CD8-positive, alpha-beta T cell (primary cell): ENCODE measurements at regions of chr7 and their contacts with region 1.

Region 1: DNA sequence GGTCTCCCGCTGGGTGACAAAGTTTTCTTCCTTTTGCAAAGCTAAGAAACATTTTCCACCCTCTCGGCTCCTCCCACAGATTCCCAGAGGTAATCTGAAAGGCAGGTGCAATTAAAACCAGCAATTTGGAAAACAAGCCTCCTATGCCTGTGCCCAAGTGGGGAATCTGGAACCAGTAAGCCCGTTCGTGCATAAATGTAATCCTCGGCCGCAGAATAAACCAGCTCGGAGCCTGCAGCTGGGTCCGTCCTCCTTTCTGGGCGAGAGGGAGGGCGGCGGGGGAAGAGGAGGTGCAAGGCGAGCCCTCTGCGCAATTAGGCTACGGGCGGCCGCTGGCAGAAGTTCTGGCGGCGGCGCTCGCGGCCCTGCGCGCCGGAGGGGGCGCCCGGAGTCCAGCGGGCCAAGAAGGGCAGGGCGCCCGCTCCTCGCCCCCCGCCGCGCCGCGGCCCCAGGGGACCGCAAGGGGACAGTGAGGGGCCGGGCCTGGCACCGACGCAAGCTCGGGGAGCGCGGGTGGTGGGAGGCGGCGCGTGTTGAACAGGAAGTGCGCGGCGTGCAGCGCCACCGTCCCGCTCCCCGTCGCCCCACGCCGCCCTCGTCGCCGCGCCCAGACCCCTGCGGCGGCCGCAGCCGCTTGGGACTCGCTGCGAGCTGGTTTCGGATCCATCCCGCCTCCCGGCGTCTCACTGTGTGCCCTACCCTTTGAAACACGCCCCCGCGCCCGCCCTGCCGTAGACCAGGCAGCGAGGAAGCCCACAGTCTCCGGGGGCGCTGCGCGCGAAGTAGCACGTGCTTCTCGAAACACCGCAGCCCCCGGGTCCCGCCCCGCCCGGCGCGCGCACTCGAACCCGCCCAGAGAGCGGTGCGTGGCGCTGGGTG is at the start of gene PRKAG2:
- DNase-seq: peak; percentile 53 to 85 (median 78)
- ATAC-seq: peak; percentile 59
- H3K4me3 ChIP-seq: peak within 1 kb of the TSS; percentile 71 to 95
- H3K4me3 Mint-ChIP-seq: peak within 1 kb of the TSS; percentile 97
- H3K27ac ChIP-seq: peak within 1 kb of the TSS; percentile 53 to 67
- H3K27ac Mint-ChIP-seq: peak within 1 kb of the TSS; percentile 92
- H3K4me1 ChIP-seq: peaks cover 20% of the 10 kb centered on the region
- H3K4me1 Mint-ChIP-seq: peaks cover 25% of the 10 kb centered on the region
- H3K27me3 ChIP-seq: no peaks in the 10 kb centered on the region
- H3K27me3 Mint-ChIP-seq: no peaks in the 10 kb centered on the region
- CTCF ChIP-seq: peak; percentile 27
- total RNA-seq, gene PRKAG2: 41.3 to 41.8 TPM

Region 2: GRCh38 chr7:151381348-151382078 is 495.6 kb before region 1 on chr7:
- CTCF ChIA-PET with region 1: no interaction called
- POLR2A ChIA-PET with region 1: no interaction called
- intact Hi-C with region 1: no loop called
- DNase-seq: peak; percentile 15 to 86 (median 64)
- ATAC-seq: peak; percentile 85
- H3K4me3 ChIP-seq: peak overlapping the region; percentile 40 to 54
- H3K4me3 Mint-ChIP-seq: peak overlapping the region; percentile 78
- H3K27ac ChIP-seq: peak overlapping the region in 1 of 2 experiments; percentile 22
- H3K27ac Mint-ChIP-seq: peak overlapping the region; percentile 18
- H3K4me1 ChIP-seq: peaks cover 19% of the 10 kb centered on the region
- H3K4me1 Mint-ChIP-seq: peaks cover 12% of the 10 kb centered on the region
- H3K27me3 ChIP-seq: peaks cover 6 to 7% of the 10 kb centered on the region in 2 experiments
- H3K27me3 Mint-ChIP-seq: peaks cover 7% of the 10 kb centered on the region
- CTCF ChIP-seq: no peak

Region 3: GRCh38 chr7:151519765-151520418 is 357.2 kb before region 1 on chr7 and contains the start of gene RHEB:
- CTCF ChIA-PET with region 1: no interaction called
- POLR2A ChIA-PET with region 1: interaction called, 3 read pairs
- intact Hi-C with region 1: loop called (anchors 2 to 5 kb)
- DNase-seq: peak; percentile 94 to 99 (median 98)
- ATAC-seq: peak; percentile 82
- H3K4me3 ChIP-seq: peak within 1 kb of the TSS; percentile 65 to 73
- H3K4me3 Mint-ChIP-seq: peak within 1 kb of the TSS; percentile 84
- H3K27ac ChIP-seq: peak within 1 kb of the TSS; percentile 85 to 86
- H3K27ac Mint-ChIP-seq: peak within 1 kb of the TSS; percentile 94
- H3K4me1 ChIP-seq: peaks cover 34% of the 10 kb centered on the region
- H3K4me1 Mint-ChIP-seq: peaks cover 41% of the 10 kb centered on the region
- H3K27me3 ChIP-seq: no peaks in the 10 kb centered on the region
- H3K27me3 Mint-ChIP-seq: no peaks in the 10 kb centered on the region
- CTCF ChIP-seq: no peak
- total RNA-seq, gene RHEB: 57.2 to 61.0 TPM

Region 4: DNA sequence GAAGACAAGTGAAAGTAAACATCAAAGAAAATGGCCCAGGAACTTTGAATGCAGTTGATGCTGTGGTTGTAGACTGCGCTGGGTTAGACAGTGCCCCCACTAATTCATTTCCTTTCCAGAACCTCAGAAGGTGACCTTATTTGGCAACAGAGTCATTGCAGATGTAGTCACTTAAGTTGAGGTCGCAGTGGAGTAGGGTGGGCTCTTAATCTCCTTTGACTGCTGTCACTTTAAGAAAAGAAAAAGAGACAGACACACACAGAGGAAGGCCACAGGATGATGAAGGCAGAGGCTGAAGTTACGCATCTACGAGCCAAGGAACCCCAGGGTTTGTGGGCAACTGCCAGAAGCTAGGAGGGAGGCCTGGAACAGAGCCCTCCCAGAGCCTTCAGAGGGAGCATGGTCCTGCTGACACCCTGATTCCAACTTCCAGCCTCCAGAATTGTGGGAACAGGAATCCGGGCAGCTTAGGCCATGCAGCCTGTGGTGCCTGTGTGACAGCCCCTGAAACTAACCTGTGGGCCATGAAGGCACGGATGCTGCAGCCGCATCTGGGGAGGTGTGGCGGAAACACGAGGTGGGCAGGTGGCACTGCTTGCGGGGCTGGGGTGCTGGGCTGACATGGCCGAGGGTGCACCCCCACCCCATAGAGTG is 107.8 kb before region 1 on chr7:
- CTCF ChIA-PET with region 1: no interaction called
- POLR2A ChIA-PET with region 1: interaction called, 3 read pairs
- intact Hi-C with region 1: loop called (anchors 2 to 5 kb)
- DNase-seq: peak in 8 of 9 experiments; percentile 21 to 90 (median 62)
- ATAC-seq: peak; percentile 93
- H3K4me3 ChIP-seq: peak overlapping the region; percentile 42 to 51
- H3K4me3 Mint-ChIP-seq: peak overlapping the region; percentile 77
- H3K27ac ChIP-seq: peak overlapping the region; percentile 63 to 78
- H3K27ac Mint-ChIP-seq: peak overlapping the region; percentile 96
- H3K4me1 ChIP-seq: peaks cover 67% of the 10 kb centered on the region
- H3K4me1 Mint-ChIP-seq: peaks cover 74% of the 10 kb centered on the region
- H3K27me3 ChIP-seq: no peaks in the 10 kb centered on the region
- H3K27me3 Mint-ChIP-seq: no peaks in the 10 kb centered on the region
- CTCF ChIP-seq: no peak

Region 5: GRCh38 chr7:151838861-151839391 is 38.2 kb before region 1 on chr7:
- CTCF ChIA-PET with region 1: no interaction called
- POLR2A ChIA-PET with region 1: interaction called, 8 read pairs
- intact Hi-C with region 1: loop called in 1 of 2 experiments (anchors 2 kb)
- DNase-seq: peak; percentile 11 to 80 (median 53)
- ATAC-seq: peak; percentile 77
- H3K4me3 ChIP-seq: peak overlapping the region; percentile 11 to 27
- H3K4me3 Mint-ChIP-seq: peak overlapping the region; percentile 69
- H3K27ac ChIP-seq: peak overlapping the region in 1 of 2 experiments; percentile 67
- H3K27ac Mint-ChIP-seq: peak overlapping the region; percentile 45
- H3K4me1 ChIP-seq: peaks cover 31% of the 10 kb centered on the region
- H3K4me1 Mint-ChIP-seq: peaks cover 37% of the 10 kb centered on the region
- H3K27me3 ChIP-seq: no peaks in the 10 kb centered on the region
- H3K27me3 Mint-ChIP-seq: no peaks in the 10 kb centered on the region
- CTCF ChIP-seq: no peak

Region 6: DNA sequence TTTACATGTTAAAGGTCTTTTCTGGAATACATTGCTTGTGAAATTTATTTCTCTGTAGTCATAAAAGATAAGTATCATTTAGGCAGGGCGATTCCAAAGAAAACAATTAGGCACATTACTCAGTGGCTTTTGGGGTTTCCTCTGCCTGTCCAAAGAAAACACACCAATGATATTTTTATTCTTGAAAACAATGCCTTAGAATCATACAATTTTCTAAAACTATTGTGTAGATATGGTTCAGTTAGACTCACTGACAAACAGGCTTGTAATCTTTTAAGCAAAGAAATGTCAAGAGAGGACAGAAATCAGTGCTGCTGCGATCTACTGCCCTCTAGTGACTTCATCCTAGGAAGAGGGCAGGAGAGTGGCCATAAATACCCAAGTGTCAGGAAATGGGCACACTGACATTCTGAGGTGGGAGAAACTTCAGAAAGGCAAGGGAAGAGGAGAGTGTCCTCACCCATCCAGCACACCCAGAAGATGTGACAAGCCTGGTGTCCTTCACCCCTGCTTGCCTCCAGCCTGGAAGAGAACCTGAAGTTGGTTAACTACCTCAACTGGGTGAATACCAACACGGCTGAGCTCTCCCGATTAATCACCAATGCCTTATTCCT is 268.8 kb after region 1 on chr7:
- CTCF ChIA-PET with region 1: no interaction called
- POLR2A ChIA-PET with region 1: interaction called, 6 read pairs
- intact Hi-C with region 1: loop called (anchors 5 to 10 kb)
- DNase-seq: peak in 7 of 9 experiments; percentile 11 to 65 (median 43)
- ATAC-seq: peak; percentile 46
- H3K4me3 ChIP-seq: no peak overlapping the region
- H3K4me3 Mint-ChIP-seq: no peak overlapping the region
- H3K27ac ChIP-seq: peak overlapping the region in 1 of 2 experiments; percentile 61
- H3K27ac Mint-ChIP-seq: peak overlapping the region; percentile 91
- H3K4me1 ChIP-seq: peaks cover 47% of the 10 kb centered on the region
- H3K4me1 Mint-ChIP-seq: peaks cover 46% of the 10 kb centered on the region
- H3K27me3 ChIP-seq: no peaks in the 10 kb centered on the region
- H3K27me3 Mint-ChIP-seq: no peaks in the 10 kb centered on the region
- CTCF ChIP-seq: peak; percentile 53

Region 7: DNA sequence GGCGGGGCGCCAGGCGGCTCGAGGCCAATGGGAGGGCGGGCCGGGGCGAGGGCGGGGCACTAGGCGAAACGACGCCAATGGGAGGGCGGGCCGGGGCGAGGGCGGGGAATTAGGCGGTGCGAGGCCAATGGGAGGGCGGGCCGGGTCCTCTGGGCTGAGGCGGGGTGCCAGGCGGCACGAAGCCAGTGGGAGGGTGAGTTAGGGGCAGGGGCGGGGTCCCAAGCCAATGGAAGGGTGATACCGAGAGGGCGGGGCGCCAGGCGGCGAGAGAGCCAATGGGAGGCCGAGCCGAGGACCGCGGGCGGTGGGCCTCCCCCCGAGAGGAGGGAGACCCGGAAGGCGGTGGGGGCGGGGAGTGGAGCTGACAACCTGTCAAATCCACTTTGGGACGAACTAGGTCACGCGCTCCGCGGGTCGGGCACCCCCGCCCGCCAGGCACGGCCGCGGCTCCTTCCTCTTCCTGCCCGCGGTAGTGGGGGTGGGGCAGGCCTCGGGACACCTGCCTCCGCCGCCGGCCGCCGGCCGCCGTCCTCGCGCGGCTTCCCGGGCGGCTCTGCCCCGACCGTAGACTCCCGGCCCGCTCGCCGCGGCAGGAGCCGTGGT is 586.7 kb after region 1 on chr7:
- CTCF ChIA-PET with region 1: no interaction called
- POLR2A ChIA-PET with region 1: no interaction called
- intact Hi-C with region 1: loop called in 1 of 2 experiments (anchors 10 kb)
- DNase-seq: peak; percentile 100
- ATAC-seq: peak; percentile 92
- H3K4me3 ChIP-seq: peak overlapping the region; percentile 90 to 91
- H3K4me3 Mint-ChIP-seq: peak overlapping the region; percentile 89
- H3K27ac ChIP-seq: peak overlapping the region; percentile 83 to 92
- H3K27ac Mint-ChIP-seq: peak overlapping the region; percentile 32
- H3K4me1 ChIP-seq: peaks cover 12% of the 10 kb centered on the region
- H3K4me1 Mint-ChIP-seq: peaks cover 11% of the 10 kb centered on the region
- H3K27me3 ChIP-seq: no peaks in the 10 kb centered on the region
- H3K27me3 Mint-ChIP-seq: no peaks in the 10 kb centered on the region
- CTCF ChIP-seq: no peak